ENCODE measurements at regions of chr20 and their contacts with region 1.

Region 1: DNA sequence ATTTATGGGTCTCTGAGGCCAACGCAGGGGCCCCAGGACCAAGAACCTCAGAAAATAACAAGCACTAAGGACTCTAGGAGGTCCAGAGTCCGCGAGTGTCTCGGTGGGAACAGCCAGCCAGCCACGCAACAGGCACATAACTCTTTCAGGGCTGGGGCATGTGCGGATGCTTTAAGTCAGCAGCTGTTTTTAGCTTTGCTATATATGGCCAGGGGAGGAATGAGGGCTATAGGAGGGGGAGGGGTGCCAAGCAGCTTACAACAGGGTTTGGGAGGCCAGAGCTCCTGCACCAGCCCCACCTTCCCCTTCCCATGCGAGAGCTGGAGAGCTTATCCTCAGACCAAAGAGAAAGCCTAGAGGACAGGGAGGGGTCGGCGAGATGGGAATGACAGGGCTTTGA is 6.2 kb downstream of the JPH2 start:
- DNase-seq: no peak
- ATAC-seq: no peak
- H3K4me3 ChIP-seq: no peak overlapping the region
- H3K27ac ChIP-seq: no peak overlapping the region
- H3K4me1 ChIP-seq: no peaks in the 10 kb centered on the region
- H3K27me3 ChIP-seq: no peaks in the 10 kb centered on the region; a peak in 3 of 4 replicates
- CTCF ChIP-seq: no peak
- EP300 ChIP-seq: no peak
- POLR2A ChIP-seq: no peak
- RAD21 ChIP-seq: no peak

Region 2: GRCh38 chr20:44123251-44123650 is 57.6 kb before region 1 on chr20:
- CTCF ChIA-PET with region 1: no interaction called
- POLR2A ChIA-PET with region 1: no interaction called
- RAD21 ChIA-PET with region 1: no interaction called
- SMC1A ChIA-PET with region 1: no interaction called
- in situ Hi-C with region 1: loop called (anchors 5 kb)
- intact Hi-C with region 1: loop called (anchors 5 kb)
- DNase-seq: no peak
- ATAC-seq: no peak
- H3K4me3 ChIP-seq: no peak overlapping the region
- H3K27ac ChIP-seq: no peak overlapping the region
- H3K4me1 ChIP-seq: no peaks in the 10 kb centered on the region
- H3K27me3 ChIP-seq: peaks cover 0 to 3% of the 10 kb centered on the region in 2 experiments; a peak in 3 of 4 replicates
- CTCF ChIP-seq: no peak
- EP300 ChIP-seq: no peak
- POLR2A ChIP-seq: no peak
- RAD21 ChIP-seq: no peak

Measured in GM12878 (cell line).